Right ventricle myocardium superior (tissue), 1 donor: ENCODE measurements at regions of chr22 and their contacts with region 1.

Region 1: DNA sequence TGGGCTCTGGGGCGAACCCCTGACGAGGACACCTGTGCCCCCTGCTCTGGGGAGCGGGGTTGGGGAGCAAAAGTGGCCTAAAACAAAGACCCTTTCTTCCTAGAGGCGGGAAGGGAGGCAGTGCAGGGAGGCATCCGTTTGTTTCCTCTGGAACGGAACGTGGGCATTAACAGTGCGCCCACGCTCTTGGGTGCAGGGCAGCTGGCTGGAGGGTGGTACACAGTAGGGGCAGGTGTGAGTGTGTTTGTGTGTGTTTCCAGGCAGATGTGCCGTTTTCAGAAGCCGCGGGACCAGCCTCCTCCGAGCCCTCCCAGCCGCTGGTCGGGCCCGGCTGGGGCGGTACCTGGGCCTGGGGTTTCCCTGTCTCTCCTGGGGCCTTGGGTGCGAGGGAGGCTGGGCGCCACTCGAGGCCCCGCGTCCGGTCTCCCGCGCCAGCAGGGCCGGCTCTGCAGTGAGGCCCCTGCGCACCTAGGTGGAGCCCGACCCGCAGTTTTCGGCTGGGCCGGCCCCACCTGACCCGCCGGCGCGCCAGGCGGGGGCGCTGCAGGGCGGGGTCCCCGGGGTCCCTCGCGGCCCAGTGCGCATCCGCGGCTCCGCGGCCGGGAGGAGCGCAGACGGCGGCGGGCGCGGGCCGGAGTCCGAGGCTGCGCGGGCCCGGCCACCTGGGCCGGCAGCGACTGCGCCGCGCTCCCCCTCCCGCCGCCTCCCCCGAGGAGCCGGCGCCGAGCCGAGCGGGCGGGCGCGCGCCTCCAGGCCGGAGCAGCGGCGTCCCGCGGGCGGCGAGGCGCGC is 1252.7 kb downstream of the BRD1 start:
- DNase-seq: no peak
- ATAC-seq: peak; percentile 72

Region 2: DNA sequence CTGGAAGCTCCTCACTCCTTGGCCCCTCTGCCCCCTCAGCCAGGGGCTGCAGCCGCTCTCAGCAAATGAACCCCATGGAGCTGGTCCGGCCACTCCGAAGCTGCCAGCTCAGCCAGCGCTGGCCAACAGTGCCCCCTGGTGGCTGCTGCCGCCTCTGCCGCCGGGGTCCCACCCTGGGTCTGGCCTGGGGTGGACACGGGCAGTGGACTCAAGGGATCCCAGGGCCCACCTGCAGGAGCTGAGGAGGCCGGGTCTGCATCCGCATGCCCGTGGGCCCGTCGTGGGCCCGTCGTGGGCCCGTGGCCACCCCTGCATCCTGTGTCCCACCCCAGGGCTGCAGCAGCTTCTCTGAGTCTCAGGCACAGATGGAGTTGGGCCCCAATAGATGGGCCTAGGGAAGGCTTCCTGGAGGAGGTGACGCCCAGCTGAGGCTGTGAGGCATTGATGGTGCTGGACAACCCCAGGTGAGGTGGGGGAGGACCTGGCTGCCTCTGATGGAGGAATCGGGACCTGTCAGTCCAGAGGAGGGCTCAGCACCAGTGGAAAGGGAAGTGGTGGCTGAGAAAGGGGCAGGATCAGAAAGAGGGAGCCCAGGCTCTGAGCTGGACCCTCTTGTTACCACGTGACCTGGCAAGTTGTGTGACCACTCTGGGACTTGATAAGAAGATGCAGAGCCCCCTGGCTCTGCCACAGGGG is 730.4 kb after region 1 on chr22:
- intact Hi-C with region 1: loop called (anchors 10 kb)
- DNase-seq: peak; percentile 69
- ATAC-seq: peak; percentile 88

Region 3: DNA sequence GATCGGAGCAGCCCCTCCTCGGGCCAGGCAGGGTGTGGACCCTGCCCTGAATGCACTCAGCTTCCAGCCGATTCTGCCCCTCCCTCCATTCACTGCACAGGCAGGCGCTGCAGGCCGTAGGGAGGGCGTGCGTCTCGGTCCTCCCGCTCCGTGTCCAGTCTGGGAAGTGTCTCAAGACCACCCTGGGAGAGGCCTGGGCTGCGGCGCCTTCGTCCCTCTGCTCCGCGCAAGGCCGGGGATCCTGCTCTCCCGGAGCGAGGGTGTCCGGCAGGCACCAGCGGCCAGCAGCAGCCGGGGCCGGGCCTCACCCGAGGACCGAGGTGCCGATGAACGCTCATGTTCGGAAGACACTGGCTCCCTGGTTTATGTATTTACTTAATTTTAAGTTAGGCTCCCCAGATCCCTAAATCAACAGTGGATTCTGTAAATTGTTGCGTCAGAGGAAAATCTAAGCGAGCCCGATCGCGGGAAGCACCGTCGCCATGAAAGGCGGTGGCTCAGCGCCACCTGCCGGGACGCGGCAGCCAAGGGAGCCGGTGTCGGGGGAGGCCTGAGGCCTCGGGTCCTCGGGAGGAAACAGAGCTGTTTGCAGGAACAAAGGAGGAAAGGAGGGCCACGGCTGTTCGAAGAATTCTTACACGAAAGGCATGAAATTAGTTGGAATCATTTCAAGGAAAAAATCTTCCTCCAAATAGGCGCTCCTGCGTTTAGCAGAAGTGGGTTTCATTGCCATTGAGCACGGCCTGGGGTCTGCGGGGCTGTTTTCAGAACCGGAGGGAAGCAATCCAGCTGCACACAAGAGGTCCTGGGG is 1057.4 kb after region 1 on chr22:
- intact Hi-C with region 1: loop called (anchors 5 kb)
- DNase-seq: peak; percentile 68
- ATAC-seq: peak; percentile 89